CD4-positive, alpha-beta memory T cell (primary cell): ENCODE measurements at regions of chr10 and their contacts with region 1.

Region 1: DNA sequence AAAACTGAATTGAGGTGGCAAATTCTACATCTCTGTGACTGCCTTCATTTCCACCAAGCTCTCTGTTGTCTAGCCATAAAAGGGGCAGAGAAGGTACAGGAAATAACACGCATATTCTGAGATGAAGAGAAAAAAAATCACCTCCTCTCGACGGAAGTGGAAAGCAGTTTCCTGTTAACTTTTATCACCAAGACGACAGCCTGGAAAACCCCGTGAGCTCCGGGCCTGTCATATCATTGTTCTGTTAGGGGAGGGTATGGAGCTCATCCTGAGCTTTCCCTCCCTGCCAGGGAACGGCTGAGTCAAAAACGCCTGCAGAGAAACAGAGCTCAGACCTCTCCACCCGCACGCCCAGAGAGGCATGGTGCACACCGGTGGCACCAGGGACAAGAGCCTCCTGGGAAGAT is 200.3 kb downstream of the PRPF18 start:
- DNase-seq: peak; percentile 87 to 94 (median 91)
- H3K4me3 ChIP-seq: peak overlapping the region in 1 of 2 donors; percentile 32
- H3K4me3 Mint-ChIP-seq: peak overlapping the region; percentile 65 to 91 (median 81)
- H3K27ac ChIP-seq: peak overlapping the region; percentile 91
- H3K27ac Mint-ChIP-seq: no peak overlapping the region
- H3K4me1 ChIP-seq: peaks cover 51% of the 10 kb centered on the region
- H3K4me1 Mint-ChIP-seq: peaks cover 10 to 34% (median 25%) of the 10 kb centered on the region in 4 donors
- H3K27me3 ChIP-seq: no peaks in the 10 kb centered on the region
- H3K27me3 Mint-ChIP-seq: no peaks in the 10 kb centered on the region

Region 2: DNA sequence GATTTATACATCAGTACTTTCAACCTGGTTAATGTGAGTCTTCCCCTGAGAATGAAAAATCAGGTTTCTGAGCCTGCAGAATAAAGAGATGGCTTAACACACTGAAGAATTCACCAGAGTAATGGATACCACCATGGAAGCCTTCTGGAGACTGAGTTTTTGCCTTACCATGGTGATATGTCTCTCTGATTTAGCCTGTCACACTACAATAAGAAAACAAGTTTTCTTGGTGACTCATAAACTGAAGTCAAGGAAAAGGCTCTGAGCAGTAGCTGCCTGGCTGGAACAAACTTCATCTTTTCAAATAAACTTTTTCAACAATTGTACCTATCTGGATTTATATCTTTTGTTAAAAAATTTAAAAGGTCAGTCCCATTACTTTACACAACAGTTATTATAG is 28.7 kb after region 1 on chr10:
- CTCF ChIA-PET with region 1: no interaction called
- POLR2A ChIA-PET with region 1: no interaction called
- intact Hi-C with region 1: no loop called
- DNase-seq: no peak
- H3K4me3 ChIP-seq: no peak overlapping the region
- H3K4me3 Mint-ChIP-seq: no peak overlapping the region
- H3K27ac ChIP-seq: no peak overlapping the region
- H3K27ac Mint-ChIP-seq: no peak overlapping the region
- H3K4me1 ChIP-seq: peaks cover 10% of the 10 kb centered on the region
- H3K4me1 Mint-ChIP-seq: peaks cover 6 to 11% (median 9%) of the 10 kb centered on the region in 4 donors
- H3K27me3 ChIP-seq: no peaks in the 10 kb centered on the region
- H3K27me3 Mint-ChIP-seq: no peaks in the 10 kb centered on the region

Region 3: GRCh38 chr10:14032395-14032998 is 245.5 kb after region 1 on chr10:
- CTCF ChIA-PET with region 1: interaction called, 10 read pairs
- POLR2A ChIA-PET with region 1: interaction called, 3 read pairs
- intact Hi-C with region 1: no loop called
- DNase-seq: peak in 4 of 5 donors; percentile 19 to 44 (median 38)
- H3K4me3 ChIP-seq: no peak overlapping the region
- H3K4me3 Mint-ChIP-seq: peak overlapping the region in 2 of 8 donors; percentile 14 to 21
- H3K27ac ChIP-seq: no peak overlapping the region
- H3K27ac Mint-ChIP-seq: peak overlapping the region in 1 of 7 donors; percentile 50
- H3K4me1 ChIP-seq: no peaks in the 10 kb centered on the region
- H3K4me1 Mint-ChIP-seq: peaks cover 4 to 9% (median 7%) of the 10 kb centered on the region in 4 donors
- H3K27me3 ChIP-seq: no peaks in the 10 kb centered on the region
- H3K27me3 Mint-ChIP-seq: peaks cover 0 to 5% of the 10 kb centered on the region in 2 donors

Region 4: GRCh38 chr10:14185316-14186045 is 398.5 kb after region 1 on chr10:
- CTCF ChIA-PET with region 1: interaction called, 6 read pairs
- POLR2A ChIA-PET with region 1: interaction called, 16 read pairs
- intact Hi-C with region 1: loop called (anchors 1 kb)
- DNase-seq: peak in 3 of 5 donors; percentile 74 to 85 (median 80)
- H3K4me3 ChIP-seq: peak overlapping the region in 1 of 2 donors; percentile 7
- H3K4me3 Mint-ChIP-seq: peak overlapping the region; percentile 73 to 86 (median 80)
- H3K27ac ChIP-seq: peak overlapping the region; percentile 51
- H3K27ac Mint-ChIP-seq: peak overlapping the region; percentile 93 to 99 (median 98)
- H3K4me1 ChIP-seq: peaks cover 24% of the 10 kb centered on the region
- H3K4me1 Mint-ChIP-seq: peaks cover 21 to 28% (median 24%) of the 10 kb centered on the region in 4 donors
- H3K27me3 ChIP-seq: peaks cover 9% of the 10 kb centered on the region
- H3K27me3 Mint-ChIP-seq: peaks cover 19 to 23% of the 10 kb centered on the region in 2 donors

Region 5: DNA sequence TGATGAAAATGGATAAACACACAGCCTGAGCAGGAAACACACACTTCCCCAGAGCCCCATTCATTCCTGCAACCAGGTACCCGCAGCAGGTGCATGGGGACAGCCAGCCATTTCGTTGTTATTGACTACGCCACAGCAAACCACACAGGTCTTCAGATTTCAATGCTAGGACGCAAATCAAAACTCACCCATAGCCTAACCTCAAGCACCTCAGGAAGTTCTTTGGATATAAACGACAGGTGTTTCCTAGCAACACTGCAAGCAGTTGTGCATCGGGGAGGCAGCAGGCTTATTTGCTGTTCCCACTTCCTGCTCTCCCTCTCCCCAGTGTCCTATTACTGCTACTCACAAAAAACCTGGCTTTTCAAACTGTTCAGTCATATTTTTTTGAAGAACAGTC is 720.2 kb after region 1 on chr10:
- CTCF ChIA-PET with region 1: no interaction called
- POLR2A ChIA-PET with region 1: no interaction called
- intact Hi-C with region 1: loop called (anchors 5 kb)
- DNase-seq: peak; percentile 80 to 89 (median 85)
- H3K4me3 ChIP-seq: no peak overlapping the region
- H3K4me3 Mint-ChIP-seq: peak overlapping the region; percentile 26 to 75 (median 67)
- H3K27ac ChIP-seq: peak overlapping the region; percentile 56
- H3K27ac Mint-ChIP-seq: peak overlapping the region; percentile 89 to 99 (median 96)
- H3K4me1 ChIP-seq: peaks cover 39% of the 10 kb centered on the region
- H3K4me1 Mint-ChIP-seq: peaks cover 37 to 40% (median 38%) of the 10 kb centered on the region in 4 donors
- H3K27me3 ChIP-seq: no peaks in the 10 kb centered on the region
- H3K27me3 Mint-ChIP-seq: no peaks in the 10 kb centered on the region

Region 6: GRCh38 chr10:14959276-14960057 is 1172.4 kb after region 1 on chr10 and contains the start of gene MEIG1:
- CTCF ChIA-PET with region 1: no interaction called
- POLR2A ChIA-PET with region 1: no interaction called
- intact Hi-C with region 1: loop called (anchors 10 kb)
- DNase-seq: peak; percentile 87 to 92 (median 88)
- H3K4me3 ChIP-seq: peak within 1 kb of the TSS; percentile 79 to 98
- H3K4me3 Mint-ChIP-seq: peak within 1 kb of the TSS; percentile 93 to 99 (median 96)
- H3K27ac ChIP-seq: peak within 1 kb of the TSS; percentile 92
- H3K27ac Mint-ChIP-seq: peak within 1 kb of the TSS; percentile 93 to 99 (median 96)
- H3K4me1 ChIP-seq: peaks cover 14% of the 10 kb centered on the region
- H3K4me1 Mint-ChIP-seq: peaks cover 20 to 40% (median 29%) of the 10 kb centered on the region in 4 donors
- H3K27me3 ChIP-seq: no peaks in the 10 kb centered on the region
- H3K27me3 Mint-ChIP-seq: no peaks in the 10 kb centered on the region
- total RNA-seq, gene MEIG1: not detected